SK-N-SH (cell line): ENCODE measurements at regions of chr2 and their contacts with region 1.

Region 1: DNA sequence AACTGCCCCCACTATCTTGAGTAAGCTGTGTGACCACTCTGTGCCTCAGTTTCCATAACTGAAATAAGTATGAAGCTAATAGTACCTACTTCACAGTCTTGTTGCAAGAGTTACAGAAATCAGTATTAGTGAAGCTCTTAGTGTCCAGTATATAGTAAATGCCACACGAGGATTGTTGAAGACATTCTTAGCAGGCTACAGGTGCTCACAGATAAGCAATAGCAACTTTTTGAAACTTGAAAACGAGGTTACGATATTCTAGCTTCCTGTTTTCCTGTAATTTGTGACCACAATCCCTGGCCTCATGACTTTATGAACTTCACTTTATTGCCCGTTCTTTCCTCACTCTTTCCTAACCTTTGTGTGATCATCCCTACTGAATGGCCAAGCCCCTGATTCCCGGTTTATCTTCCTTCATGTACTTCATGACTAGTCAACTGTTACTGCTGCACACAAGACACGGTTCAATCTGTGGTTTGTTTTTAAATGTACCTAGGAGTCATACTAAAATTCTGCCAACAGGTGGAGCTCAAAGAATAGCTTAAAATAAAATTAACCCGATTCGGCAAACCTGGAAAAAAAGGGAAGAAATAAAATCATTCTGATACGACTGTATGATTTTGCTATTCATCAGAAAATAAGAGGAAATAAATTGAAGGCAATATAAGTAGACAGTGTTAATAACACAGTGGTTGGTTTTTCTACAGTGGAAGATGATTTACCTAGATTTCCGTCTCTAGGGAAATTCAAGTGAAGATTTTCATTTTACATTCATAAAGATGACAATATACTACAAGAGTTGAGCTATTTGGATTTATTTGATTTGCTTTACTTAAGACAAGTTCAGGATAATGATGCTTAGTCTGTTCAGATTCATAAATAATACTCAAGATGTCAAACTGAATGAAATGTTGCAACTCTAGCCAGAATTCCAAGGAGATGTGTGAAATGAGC is 38.1 kb upstream of the STAT1 start:
- DNase-seq: peak; percentile 42
- H3K4me3 ChIP-seq: peak overlapping the region in 1 of 2 experiments; percentile 19; a peak in 1 of 4 replicates
- H3K27ac ChIP-seq: no peak overlapping the region
- H3K4me1 ChIP-seq: no peaks in the 10 kb centered on the region
- H3K27me3 ChIP-seq: no peaks in the 10 kb centered on the region
- CTCF ChIP-seq: peak; percentile 77
- EP300 ChIP-seq: no peak
- RAD21 ChIP-seq: peak; percentile 86

Region 2: DNA sequence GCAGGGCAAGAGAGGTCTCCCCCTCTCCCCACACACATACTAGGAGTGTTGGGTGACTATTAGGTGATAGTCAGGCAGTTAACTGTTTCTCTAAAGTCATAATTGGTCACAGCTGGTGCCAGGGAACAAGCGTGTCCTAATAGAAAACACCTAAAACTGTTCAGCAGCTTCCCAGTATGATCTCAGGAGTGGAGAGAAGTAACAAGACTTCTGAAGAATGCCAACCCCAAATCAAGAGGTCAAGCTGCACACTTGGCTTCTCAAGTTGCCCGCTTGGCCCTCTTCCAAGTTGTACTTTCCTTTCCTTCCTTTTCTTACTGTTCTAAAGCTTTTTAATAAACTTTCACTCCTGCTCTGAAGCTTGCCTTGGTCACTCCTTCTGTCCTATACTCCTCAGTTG is 15.7 kb before region 1 on chr2:
- CTCF ChIA-PET with region 1: interaction called, 25 read pairs
- POLR2A ChIA-PET with region 1: no interaction called
- DNase-seq: no peak
- H3K4me3 ChIP-seq: no peak overlapping the region
- H3K27ac ChIP-seq: no peak overlapping the region
- H3K4me1 ChIP-seq: peaks cover 0 to 10% of the 10 kb centered on the region in 2 experiments; a peak in 2 of 4 replicates
- H3K27me3 ChIP-seq: no peaks in the 10 kb centered on the region
- CTCF ChIP-seq: no peak
- EP300 ChIP-seq: no peak
- RAD21 ChIP-seq: no peak

Region 3: DNA sequence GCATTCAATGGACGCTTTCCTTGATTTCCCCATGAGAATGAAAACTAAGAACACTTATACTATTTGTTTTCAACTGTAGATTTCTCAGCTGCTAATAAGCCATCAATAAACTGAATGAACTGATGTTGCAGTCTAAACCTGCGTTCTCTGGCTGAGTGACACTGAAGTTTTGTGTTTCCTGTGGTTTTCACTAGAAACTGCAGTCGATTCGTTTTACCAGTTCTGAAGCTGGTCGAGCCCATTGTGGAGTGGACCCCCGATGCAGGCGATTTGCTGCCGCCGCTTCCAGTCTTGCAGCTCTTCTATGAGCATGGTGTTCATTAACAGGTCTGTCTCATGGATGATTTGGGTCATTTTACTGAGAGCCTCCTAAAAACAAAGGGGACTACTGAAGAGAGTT is 12.5 kb after region 1 on chr2:
- CTCF ChIA-PET with region 1: interaction called, 37 read pairs
- POLR2A ChIA-PET with region 1: no interaction called
- DNase-seq: no peak
- H3K4me3 ChIP-seq: no peak overlapping the region
- H3K27ac ChIP-seq: no peak overlapping the region
- H3K4me1 ChIP-seq: no peaks in the 10 kb centered on the region
- H3K27me3 ChIP-seq: no peaks in the 10 kb centered on the region
- CTCF ChIP-seq: no peak
- EP300 ChIP-seq: no peak
- RAD21 ChIP-seq: no peak

Region 4: GRCh38 chr2:191150600-191151330 is 98.7 kb after region 1 on chr2 and contains the start of gene STAT4:
- CTCF ChIA-PET with region 1: interaction called, 106 read pairs
- POLR2A ChIA-PET with region 1: no interaction called
- DNase-seq: peak; percentile 40
- H3K4me3 ChIP-seq: peak within 1 kb of the TSS; percentile 47 to 49
- H3K27ac ChIP-seq: no peak within 1 kb of the TSS
- H3K4me1 ChIP-seq: no peaks in the 10 kb centered on the region; a peak in 1 of 4 replicates
- H3K27me3 ChIP-seq: no peaks in the 10 kb centered on the region
- CTCF ChIP-seq: no peak
- EP300 ChIP-seq: no peak
- RAD21 ChIP-seq: no peak
- polyA plus RNA-seq, gene STAT4: 0.12 and 0.19 TPM in 2 replicates

Region 5: DNA sequence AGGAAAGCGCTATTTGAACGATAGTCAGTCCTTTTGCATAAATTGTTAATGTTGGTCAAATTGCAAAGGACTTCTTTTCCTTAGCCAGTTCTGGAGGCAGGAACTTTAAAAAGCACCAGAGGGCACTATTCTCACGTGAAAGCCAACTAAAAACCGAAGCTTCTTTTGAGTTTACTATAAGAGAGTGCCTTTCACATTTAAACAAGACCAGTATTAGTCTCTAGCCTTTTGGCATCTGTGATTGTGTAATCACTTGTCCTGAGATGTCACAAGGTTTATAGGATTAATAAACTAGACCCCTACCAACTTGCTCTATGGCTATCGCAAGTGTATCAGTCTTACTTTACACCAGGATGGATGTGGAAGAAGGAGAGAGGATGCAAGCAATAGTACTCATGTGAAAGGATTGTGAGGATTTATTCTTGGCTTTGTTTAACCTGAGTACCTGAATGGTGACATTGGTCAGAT is 113.1 kb after region 1 on chr2:
- CTCF ChIA-PET with region 1: interaction called, 24 read pairs
- POLR2A ChIA-PET with region 1: no interaction called
- DNase-seq: peak; percentile 44
- H3K4me3 ChIP-seq: peak overlapping the region in 1 of 2 experiments; percentile 22; a peak in 1 of 4 replicates
- H3K27ac ChIP-seq: peak overlapping the region in 1 of 2 experiments; percentile 50; a peak in 1 of 4 replicates
- H3K4me1 ChIP-seq: peaks cover 8 to 20% of the 10 kb centered on the region in 2 experiments
- H3K27me3 ChIP-seq: no peaks in the 10 kb centered on the region
- CTCF ChIP-seq: peak; percentile 69
- EP300 ChIP-seq: no peak
- RAD21 ChIP-seq: peak; percentile 91

Region 6: GRCh38 chr2:191218292-191218898 is 166.3 kb after region 1 on chr2:
- CTCF ChIA-PET with region 1: interaction called, 11 read pairs
- POLR2A ChIA-PET with region 1: no interaction called
- DNase-seq: peak; percentile 48
- H3K4me3 ChIP-seq: no peak overlapping the region
- H3K27ac ChIP-seq: no peak overlapping the region
- H3K4me1 ChIP-seq: no peaks in the 10 kb centered on the region; a peak in 3 of 4 replicates
- H3K27me3 ChIP-seq: no peaks in the 10 kb centered on the region
- CTCF ChIP-seq: peak; percentile 76
- EP300 ChIP-seq: no peak
- RAD21 ChIP-seq: peak; percentile 81

Region 7: DNA sequence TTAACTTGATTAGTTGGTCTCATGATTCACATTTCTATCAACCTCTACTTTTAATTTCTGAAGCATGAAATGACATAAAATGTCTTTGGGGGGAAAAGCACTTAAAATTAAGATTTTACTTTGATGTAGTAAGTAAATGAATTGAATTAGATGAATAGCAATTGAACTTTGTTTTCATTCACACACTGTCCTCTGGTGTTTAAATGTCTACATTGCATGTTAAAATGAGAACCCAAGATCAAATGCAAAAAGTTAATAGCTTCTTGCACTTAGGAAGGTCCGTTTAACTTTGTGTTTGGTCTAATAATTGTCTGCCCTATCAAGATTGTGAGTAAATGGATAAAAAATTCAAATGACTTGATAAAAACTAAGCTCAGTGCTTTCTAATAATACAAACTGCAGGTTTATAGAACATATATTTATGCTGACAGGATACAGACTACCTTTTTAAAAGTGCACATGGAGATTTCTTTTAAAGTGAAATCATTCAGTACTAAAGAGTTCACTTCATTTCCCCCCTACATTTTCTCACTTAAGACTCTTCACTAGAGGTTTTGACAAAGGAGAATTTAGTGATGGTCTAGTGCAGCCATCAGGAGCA is 469.6 kb after region 1 on chr2:
- CTCF ChIA-PET with region 1: interaction called, 40 read pairs
- POLR2A ChIA-PET with region 1: no interaction called
- DNase-seq: peak; percentile 46
- H3K4me3 ChIP-seq: no peak overlapping the region; a peak in 1 of 4 replicates
- H3K27ac ChIP-seq: peak overlapping the region in 1 of 2 experiments; percentile 51; a peak in 1 of 4 replicates
- H3K4me1 ChIP-seq: peaks cover 0 to 5% of the 10 kb centered on the region in 2 experiments; a peak in 2 of 4 replicates
- H3K27me3 ChIP-seq: no peaks in the 10 kb centered on the region
- CTCF ChIP-seq: peak; percentile 86
- EP300 ChIP-seq: no peak
- RAD21 ChIP-seq: peak; percentile 87